BJ (cell line): ENCODE measurements at regions of chr1 and their contacts with region 1.

Region 1: GRCh38 chr1:212035123-212035834 is at the starts of genes DTL and INTS7:
- DNase-seq: peak; percentile 96
- H3K4me3 ChIP-seq: peak within 1 kb of the TSS; percentile 65
- H3K27me3 ChIP-seq: no peaks in the 10 kb centered on the region
- CTCF ChIP-seq: peak; percentile 97
- polyA plus RNA-seq, gene DTL: 7.7 and 8.3 TPM in 2 replicates
- polyA plus RNA-seq, gene INTS7: 11.6 and 18.4 TPM in 2 replicates

Region 2: DNA sequence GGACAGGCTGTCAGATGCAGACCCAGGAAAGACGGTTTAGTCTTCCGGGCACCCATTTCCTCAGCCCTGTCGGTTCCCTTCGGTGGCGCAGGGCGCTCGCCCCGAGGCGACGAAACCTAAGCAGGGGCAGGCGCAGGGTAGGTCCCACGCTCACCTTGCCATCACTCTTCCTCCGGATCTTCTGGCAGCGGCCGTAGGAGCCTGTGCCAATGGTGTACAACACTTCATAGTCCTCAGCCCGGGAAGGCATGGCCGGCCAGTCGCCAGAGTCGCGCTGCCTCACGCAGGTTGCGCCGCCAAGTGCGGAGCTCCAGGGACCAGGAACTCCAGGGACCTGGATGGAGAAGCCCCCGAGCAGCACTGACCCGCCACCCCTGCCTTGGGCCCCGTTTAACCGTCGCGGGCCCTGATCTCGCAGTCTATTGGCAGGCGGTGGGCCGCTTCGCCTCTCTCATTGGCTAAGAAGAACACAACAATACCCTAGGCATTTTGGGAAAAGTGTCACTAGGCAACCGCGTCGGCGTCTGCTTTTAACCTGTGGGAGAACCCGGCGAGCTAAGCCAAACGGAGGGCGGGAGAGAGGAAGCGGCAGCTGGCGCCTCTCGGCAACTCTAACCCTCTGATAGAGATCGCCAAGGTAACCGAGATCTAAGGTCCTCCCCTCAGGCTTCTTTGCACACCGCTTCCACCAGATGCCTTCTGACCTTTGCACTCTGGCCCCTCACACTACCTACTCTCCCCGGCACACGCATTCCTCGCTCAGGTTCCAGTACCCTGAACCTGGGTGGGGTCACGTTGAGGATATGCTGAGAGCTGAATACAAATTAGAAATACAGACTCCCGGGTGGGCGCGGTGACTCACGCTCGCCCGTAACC is 359.8 kb before region 1 on chr1 and contains the start of gene NEK2:
- CTCF ChIA-PET with region 1: interaction called, 92 read pairs
- POLR2A ChIA-PET with region 1: no interaction called
- DNase-seq: peak; percentile 72
- H3K4me3 ChIP-seq: peak within 1 kb of the TSS; percentile 60
- H3K27me3 ChIP-seq: no peaks in the 10 kb centered on the region
- CTCF ChIP-seq: no peak
- polyA plus RNA-seq, gene NEK2: 8.8 and 14.9 TPM in 2 replicates

Region 3: DNA sequence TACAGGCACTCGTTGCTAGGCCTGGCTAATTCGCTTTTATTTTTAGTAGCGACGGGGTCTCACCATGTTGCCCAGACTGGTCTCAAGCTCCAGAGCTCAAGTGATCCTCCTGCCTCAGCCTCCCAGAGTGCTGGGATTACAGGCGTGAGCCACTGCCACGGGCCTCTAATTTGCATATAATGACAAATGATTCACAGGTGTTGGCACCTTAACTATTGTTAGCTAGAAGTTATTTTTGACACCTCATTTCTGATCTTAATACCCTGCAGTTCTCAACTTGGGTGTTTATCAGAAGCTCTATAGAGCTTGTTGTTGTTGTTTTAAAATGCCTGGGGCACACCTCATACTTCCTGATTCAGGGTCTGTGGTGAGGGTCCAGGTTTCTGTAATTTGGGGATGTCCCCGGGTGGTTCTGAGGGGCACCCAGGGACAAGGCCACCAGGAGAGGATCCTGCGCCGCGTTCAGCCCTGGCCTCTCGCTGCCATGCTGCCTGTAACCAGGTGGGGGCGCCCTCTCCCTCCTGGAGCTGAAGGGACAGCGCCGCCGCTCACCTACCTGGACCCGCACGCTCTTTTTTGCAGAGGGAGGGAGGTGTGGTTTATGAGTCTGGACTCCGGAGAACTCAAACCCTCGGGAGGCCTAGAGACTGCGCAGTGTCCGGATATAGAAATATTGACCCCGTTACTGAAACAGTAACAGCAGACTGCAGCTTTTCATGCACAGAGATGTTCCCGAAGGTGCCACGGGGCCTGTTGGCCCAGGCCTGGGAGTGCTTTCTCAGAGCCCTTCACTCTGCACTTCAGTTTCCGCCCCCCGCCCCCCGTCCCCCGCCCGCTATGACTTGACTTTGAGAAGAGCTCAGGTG is 336.9 kb before region 1 on chr1:
- CTCF ChIA-PET with region 1: interaction called, 27 read pairs
- POLR2A ChIA-PET with region 1: no interaction called
- DNase-seq: no peak
- H3K4me3 ChIP-seq: no peak overlapping the region
- H3K27me3 ChIP-seq: peaks cover 2% of the 10 kb centered on the region; the same call in 1 of the 2 replicates
- CTCF ChIP-seq: peak; percentile 98

Region 4: GRCh38 chr1:212021563-212021962 is 13.7 kb before region 1 on chr1:
- CTCF ChIA-PET with region 1: interaction called, 21 read pairs
- POLR2A ChIA-PET with region 1: no interaction called
- DNase-seq: no peak
- H3K4me3 ChIP-seq: no peak overlapping the region
- H3K27me3 ChIP-seq: no peaks in the 10 kb centered on the region
- CTCF ChIP-seq: no peak

Region 5: GRCh38 chr1:212062832-212063438 is 27.7 kb after region 1 on chr1:
- CTCF ChIA-PET with region 1: interaction called, 15 read pairs
- POLR2A ChIA-PET with region 1: no interaction called
- DNase-seq: no peak
- H3K4me3 ChIP-seq: no peak overlapping the region
- H3K27me3 ChIP-seq: no peaks in the 10 kb centered on the region
- CTCF ChIP-seq: peak; percentile 59

Region 6: DNA sequence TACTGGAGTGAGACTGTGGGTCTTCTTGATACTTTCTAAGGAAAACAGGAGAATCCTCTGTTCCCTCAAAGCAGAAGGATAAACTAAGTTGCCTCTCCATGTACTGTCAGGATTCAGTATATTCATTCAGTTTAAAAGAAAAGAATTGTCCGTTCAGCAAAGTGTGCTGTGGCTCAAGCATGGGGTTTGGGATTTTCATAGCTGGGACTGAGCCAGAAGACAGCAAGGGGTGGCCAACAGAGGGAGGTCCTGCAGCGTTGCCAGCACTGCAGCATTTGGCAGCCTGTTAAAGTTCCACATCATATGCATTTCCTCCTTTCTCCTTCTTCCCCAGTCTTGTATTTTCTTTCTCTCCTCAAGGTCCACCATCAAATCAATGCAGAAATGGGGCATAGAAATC is 75.3 kb after region 1 on chr1:
- CTCF ChIA-PET with region 1: no interaction called
- POLR2A ChIA-PET with region 1: no interaction called
- DNase-seq: no peak
- H3K4me3 ChIP-seq: no peak overlapping the region
- H3K27me3 ChIP-seq: no peaks in the 10 kb centered on the region
- CTCF ChIP-seq: peak; percentile 14; the same call in 1 of the 2 replicates